ENCODE measurements at regions of chr11 and their contacts with region 1.

Region 1: DNA sequence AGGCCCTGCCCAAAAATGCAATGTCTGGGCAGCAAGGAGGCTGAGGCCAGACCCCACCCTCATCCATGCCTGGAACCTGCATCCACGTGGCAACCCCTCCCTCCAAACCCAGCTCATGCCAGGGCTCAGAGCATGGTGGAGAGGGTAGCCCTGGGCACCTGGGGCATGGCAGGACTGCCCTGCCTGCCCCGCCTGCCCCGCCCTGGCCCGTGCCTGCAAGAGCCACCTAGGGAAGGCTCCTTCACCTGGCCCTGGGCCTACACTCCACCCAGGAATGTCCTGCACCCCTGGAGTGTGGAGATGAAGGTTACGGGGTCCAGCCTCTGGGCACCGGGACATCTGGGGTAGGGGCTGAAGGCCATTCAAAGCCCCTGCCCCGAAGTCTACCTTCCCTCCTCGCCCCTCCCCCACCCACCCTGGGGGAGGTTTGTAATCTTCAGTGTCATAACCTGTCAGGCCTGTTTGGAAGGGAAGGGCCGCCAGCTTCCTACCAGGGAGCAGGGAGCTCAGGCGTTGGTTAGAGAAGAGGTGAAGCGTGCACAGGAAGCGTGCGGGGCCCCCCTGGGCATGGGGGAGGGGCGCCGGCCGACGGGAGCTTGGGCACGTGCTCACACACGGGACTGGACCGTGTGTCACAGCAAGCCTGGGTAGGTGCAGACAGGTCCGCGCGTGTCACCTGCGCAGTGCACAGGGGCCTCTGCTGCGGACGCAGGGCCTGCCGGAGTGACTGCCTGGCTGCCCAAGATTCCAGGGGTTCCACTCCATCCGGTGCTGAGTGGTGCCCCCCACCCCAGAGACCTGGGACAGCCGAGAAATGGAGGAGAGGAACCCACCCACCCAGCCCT is 30.7 kb upstream of the TH start:
- DNase-seq: no peak
- ATAC-seq: no peak
- H3K4me3 ChIP-seq: no peak overlapping the region
- H3K27ac ChIP-seq: no peak overlapping the region
- H3K4me1 ChIP-seq: no peaks in the 10 kb centered on the region
- H3K27me3 ChIP-seq: no peaks in the 10 kb centered on the region

Region 2: DNA sequence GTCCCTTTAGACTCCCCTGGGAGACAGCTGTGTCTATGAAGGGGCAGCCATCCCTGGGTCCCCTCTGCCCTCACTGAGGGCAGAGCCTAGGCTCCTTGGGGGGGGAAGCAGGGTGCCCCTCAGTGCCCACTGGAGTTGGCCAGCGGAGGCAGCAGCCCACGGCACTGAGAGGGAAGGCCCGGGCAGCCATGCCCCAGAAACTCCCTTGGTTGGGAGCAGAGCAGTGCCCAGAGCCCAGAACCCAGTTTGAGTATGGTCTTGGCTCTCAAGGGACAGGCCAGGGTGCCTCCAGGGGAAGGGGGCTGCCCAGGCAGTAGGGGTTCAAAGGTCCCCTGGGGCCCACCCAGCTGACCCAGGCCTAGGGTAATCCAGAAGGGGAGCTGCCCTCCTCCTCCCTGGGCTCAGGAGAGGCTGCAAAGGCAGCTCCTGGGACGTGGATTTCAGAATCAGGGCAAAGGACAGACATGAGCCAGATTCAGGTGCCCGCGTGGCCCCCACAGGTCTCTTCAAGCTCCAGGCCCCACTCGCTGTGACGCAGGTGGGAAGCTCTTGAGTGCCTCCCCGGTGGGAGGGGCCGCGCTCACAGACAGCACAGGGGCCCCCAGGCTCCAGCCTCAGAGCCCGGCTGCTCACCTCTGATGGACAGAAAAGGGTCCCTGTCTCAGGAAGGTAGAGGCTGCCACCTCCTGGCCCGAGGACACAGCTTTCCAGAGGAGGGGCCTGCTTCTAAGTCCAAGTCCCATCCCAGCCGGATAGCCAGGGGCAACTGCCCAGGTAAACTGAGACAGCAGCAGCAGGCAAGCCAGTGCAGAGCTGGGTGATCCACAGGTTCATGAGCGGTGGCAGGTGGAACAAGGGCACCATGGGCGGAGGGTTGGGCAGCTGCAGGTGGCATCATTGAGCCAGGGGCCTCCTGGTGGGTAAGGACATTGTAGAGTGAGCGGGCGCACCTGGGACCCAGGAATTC is 96.8 kb after region 1 on chr11:
- intact Hi-C with region 1: loop called (anchors 5 kb)
- DNase-seq: no peak
- ATAC-seq: no peak
- H3K4me3 ChIP-seq: no peak overlapping the region
- H3K27ac ChIP-seq: no peak overlapping the region
- H3K4me1 ChIP-seq: no peaks in the 10 kb centered on the region
- H3K27me3 ChIP-seq: no peaks in the 10 kb centered on the region

Measured in right cardiac atrium (tissue), 5 donors.